Endothelial cell of umbilical vein (primary cell): ENCODE measurements at regions of chr2 and their contacts with region 1.

Region 1: GRCh38 chr2:677056-677965 is at the start of gene TMEM18:
- DNase-seq: peak; percentile 98
- H3K4me3 ChIP-seq: peak within 1 kb of the TSS; percentile 39 to 80 (median 79)
- H3K27ac ChIP-seq: peak within 1 kb of the TSS; percentile 91
- H3K4me1 ChIP-seq: peaks cover 25% of the 10 kb centered on the region
- H3K27me3 ChIP-seq: no peaks in the 10 kb centered on the region
- CTCF ChIP-seq: peak in 1 of 2 donors; percentile 6
- POLR2A ChIP-seq: peak; percentile 99
- total RNA-seq, gene TMEM18: 23.1 and 23.7 TPM in 2 replicates

Region 2: DNA sequence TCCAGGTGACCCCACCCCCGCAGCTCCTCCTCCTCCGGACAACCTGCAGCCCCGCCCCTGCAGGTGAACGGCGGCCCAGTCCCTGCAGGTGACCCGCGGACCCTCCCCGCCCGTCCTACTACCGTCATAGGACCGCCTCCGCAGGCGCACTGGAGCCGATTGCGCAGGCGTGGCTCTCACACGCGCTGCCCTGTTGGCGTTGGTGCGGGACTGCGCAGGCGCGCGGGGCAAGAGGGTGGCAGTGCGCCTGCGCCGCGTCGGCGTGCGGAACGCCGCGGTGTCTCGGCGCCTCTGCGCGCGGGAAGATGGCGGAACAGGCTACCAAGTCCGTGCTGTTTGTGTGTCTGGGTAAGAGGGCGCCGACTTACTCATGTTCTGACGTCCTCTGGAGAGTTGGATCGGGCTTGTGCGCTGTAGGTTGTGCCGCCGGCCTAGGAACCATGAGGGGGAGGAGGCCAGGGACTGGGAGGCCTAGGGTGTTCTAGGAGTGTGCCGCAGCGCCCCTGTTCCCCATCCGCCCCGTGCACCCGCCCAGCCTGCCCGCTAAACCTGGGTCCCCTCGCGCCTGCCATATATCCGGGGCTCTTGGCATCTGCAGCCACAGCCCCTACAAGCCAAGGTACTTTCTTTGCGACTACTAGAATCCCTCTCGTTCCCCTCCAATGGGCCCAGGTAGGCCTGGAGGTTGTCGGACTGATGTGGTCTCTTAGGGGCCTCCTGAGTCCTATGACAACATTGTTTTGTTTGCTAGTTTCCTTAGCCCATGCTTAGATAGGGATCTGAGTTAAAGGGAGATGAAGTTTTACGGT is 412.4 kb before region 1 on chr2 and contains the start of gene ACP1:
- CTCF ChIA-PET with region 1: no interaction called
- POLR2A ChIA-PET with region 1: no interaction called
- dilution Hi-C with region 1: no loop called
- intact Hi-C with region 1: loop called (anchors 2 kb)
- DNase-seq: peak; percentile 97
- H3K4me3 ChIP-seq: peak within 1 kb of the TSS; percentile 75 to 90 (median 79)
- H3K27ac ChIP-seq: peak within 1 kb of the TSS; percentile 42
- H3K4me1 ChIP-seq: peaks cover 17% of the 10 kb centered on the region
- H3K27me3 ChIP-seq: no peaks in the 10 kb centered on the region
- CTCF ChIP-seq: no peak
- POLR2A ChIP-seq: peak; percentile 90
- total RNA-seq, gene ACP1: 76.2 and 80.2 TPM in 2 replicates

Region 3: DNA sequence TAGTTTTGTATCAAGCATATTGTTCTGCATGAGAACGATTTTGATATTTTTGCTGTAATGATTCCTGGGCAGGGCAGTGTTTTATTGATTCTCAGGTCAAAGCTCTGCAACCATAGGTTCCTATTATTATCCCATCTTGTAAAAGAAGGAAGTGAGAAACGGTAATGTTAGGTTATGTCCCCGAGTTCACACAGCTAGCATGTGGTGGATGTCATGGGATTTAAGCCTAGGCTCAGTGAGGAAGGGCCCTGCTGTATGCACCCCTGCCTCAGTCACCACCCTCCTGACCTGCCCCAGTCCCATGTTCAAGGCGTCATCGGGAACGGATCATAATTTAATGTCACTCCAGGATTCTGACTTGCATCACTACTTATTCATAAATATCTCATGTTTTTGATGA is 401.8 kb before region 1 on chr2:
- CTCF ChIA-PET with region 1: no interaction called
- POLR2A ChIA-PET with region 1: no interaction called
- dilution Hi-C with region 1: no loop called
- intact Hi-C with region 1: no loop called
- DNase-seq: no peak
- H3K4me3 ChIP-seq: no peak overlapping the region
- H3K27ac ChIP-seq: no peak overlapping the region
- H3K4me1 ChIP-seq: no peaks in the 10 kb centered on the region
- H3K27me3 ChIP-seq: no peaks in the 10 kb centered on the region
- CTCF ChIP-seq: no peak
- POLR2A ChIP-seq: no peak

Region 4: GRCh38 chr2:626491-627339 is 50.6 kb before region 1 on chr2:
- CTCF ChIA-PET with region 1: no interaction called
- POLR2A ChIA-PET with region 1: no interaction called
- dilution Hi-C with region 1: no loop called
- intact Hi-C with region 1: no loop called
- DNase-seq: no peak
- H3K4me3 ChIP-seq: no peak overlapping the region
- H3K27ac ChIP-seq: no peak overlapping the region
- H3K4me1 ChIP-seq: no peaks in the 10 kb centered on the region
- H3K27me3 ChIP-seq: no peaks in the 10 kb centered on the region
- CTCF ChIP-seq: no peak
- POLR2A ChIP-seq: no peak

Region 5: GRCh38 chr2:660586-661359 is 16.5 kb before region 1 on chr2:
- CTCF ChIA-PET with region 1: no interaction called
- POLR2A ChIA-PET with region 1: no interaction called
- dilution Hi-C with region 1: no loop called
- intact Hi-C with region 1: no loop called
- DNase-seq: no peak
- H3K4me3 ChIP-seq: no peak overlapping the region
- H3K27ac ChIP-seq: no peak overlapping the region
- H3K4me1 ChIP-seq: no peaks in the 10 kb centered on the region
- H3K27me3 ChIP-seq: no peaks in the 10 kb centered on the region
- CTCF ChIP-seq: no peak
- POLR2A ChIP-seq: no peak

Region 6: GRCh38 chr2:735670-736582 is 58.6 kb after region 1 on chr2:
- CTCF ChIA-PET with region 1: no interaction called
- POLR2A ChIA-PET with region 1: interaction called, 4 read pairs
- dilution Hi-C with region 1: no loop called
- intact Hi-C with region 1: loop called (anchors 1 kb)
- DNase-seq: no peak
- H3K4me3 ChIP-seq: no peak overlapping the region
- H3K27ac ChIP-seq: no peak overlapping the region
- H3K4me1 ChIP-seq: peaks cover 2% of the 10 kb centered on the region
- H3K27me3 ChIP-seq: no peaks in the 10 kb centered on the region
- CTCF ChIP-seq: no peak
- POLR2A ChIP-seq: no peak